ENCODE measurements at regions of chr2 and their contacts with region 1.

Region 1: GRCh38 chr2:119641562-119642258 is 37.3 kb upstream of the TMEM177 start:
- DNase-seq: peak; percentile 86
- ATAC-seq: peak; percentile 98
- H3K4me3 ChIP-seq: no peak overlapping the region
- H3K27ac ChIP-seq: no peak overlapping the region
- H3K4me1 ChIP-seq: no peaks in the 10 kb centered on the region; the same call in 1 of the 2 replicates
- H3K27me3 ChIP-seq: peaks cover 25% of the 10 kb centered on the region
- CTCF ChIP-seq: peak; percentile 94

Region 2: GRCh38 chr2:119592444-119592843 is 49.3 kb before region 1 on chr2:
- CTCF ChIA-PET with region 1: no interaction called
- POLR2A ChIA-PET with region 1: no interaction called
- intact Hi-C with region 1: no loop called
- DNase-seq: no peak
- ATAC-seq: no peak
- H3K4me3 ChIP-seq: no peak overlapping the region
- H3K27ac ChIP-seq: no peak overlapping the region
- H3K4me1 ChIP-seq: no peaks in the 10 kb centered on the region
- H3K27me3 ChIP-seq: peaks cover 84% of the 10 kb centered on the region
- CTCF ChIP-seq: no peak

Region 3: GRCh38 chr2:119659601-119660342 is 18.1 kb after region 1 on chr2:
- CTCF ChIA-PET with region 1: no interaction called
- POLR2A ChIA-PET with region 1: no interaction called
- intact Hi-C with region 1: loop called (anchors 1 kb)
- DNase-seq: peak; percentile 50
- ATAC-seq: peak; percentile 46
- H3K4me3 ChIP-seq: no peak overlapping the region
- H3K27ac ChIP-seq: no peak overlapping the region
- H3K4me1 ChIP-seq: no peaks in the 10 kb centered on the region
- H3K27me3 ChIP-seq: no peaks in the 10 kb centered on the region
- CTCF ChIP-seq: peak; percentile 92

Region 4: DNA sequence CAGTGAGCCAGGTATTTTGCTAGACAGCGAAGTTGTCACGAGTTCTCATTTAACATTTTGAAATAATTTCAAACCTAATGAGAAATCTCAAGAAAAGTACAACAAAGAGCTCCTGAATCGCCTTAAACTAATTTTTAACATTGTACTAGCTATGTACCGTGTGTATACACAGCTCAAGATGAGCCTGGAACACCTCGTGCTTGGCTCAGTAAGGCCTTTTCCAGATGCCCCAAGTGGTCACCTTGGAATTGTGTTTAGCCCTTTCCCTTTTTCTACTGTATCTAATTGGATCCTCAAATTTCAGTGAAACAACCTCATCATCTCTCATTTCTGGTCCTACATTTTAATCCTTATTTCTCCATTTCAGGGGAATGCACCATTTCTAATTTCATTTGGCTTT is 125.2 kb after region 1 on chr2:
- CTCF ChIA-PET with region 1: no interaction called
- POLR2A ChIA-PET with region 1: no interaction called
- intact Hi-C with region 1: no loop called
- DNase-seq: no peak
- ATAC-seq: no peak; the same call in 1 of the 2 replicates
- H3K4me3 ChIP-seq: no peak overlapping the region
- H3K27ac ChIP-seq: no peak overlapping the region
- H3K4me1 ChIP-seq: peaks cover 33% of the 10 kb centered on the region
- H3K27me3 ChIP-seq: no peaks in the 10 kb centered on the region
- CTCF ChIP-seq: 0 out of 2 replicates have a peak, but pooled peaks have one; percentile 18

Measured in PC-3 (cell line).